Right lobe of liver (tissue), 6 donors: ENCODE measurements at regions of chr9 and their contacts with region 1.

Region 1: DNA sequence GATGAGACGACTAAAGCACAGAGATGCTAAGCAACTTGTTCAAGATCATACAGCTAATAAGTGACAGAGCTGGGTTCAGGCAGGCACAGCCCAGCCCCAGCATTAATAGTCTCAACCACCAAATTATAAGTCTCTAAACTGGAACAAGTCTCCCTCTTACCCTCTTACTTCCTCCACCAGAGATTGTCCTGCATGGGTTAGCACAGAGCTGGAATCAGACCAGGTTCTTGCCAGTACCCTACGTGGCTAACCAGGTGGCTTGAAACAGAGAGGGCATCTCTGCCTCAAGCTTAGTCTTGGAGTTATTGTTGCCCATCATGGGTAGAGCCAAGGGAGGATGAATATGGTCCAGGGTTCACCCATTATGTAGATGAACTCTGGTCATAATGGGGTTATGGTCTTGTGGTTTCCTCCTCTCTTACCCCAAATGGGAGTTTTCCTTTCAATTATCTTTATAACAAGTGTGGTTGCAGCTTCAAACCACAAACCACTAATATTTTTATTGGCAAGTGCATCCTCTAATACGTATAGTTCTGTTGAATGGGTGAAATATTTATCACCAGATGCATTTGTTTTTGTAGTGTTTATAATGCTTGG is 8.3 kb upstream of the XPA start:
- DNase-seq: no peak
- ATAC-seq: no peak
- H3K4me3 ChIP-seq: no peak overlapping the region
- H3K27ac ChIP-seq: no peak overlapping the region
- H3K4me1 ChIP-seq: peaks cover 0 to 13% (median 6%) of the 10 kb centered on the region in 4 donors
- H3K27me3 ChIP-seq: no peaks in the 10 kb centered on the region
- CTCF ChIP-seq: no peak
- POLR2A ChIP-seq: no peak

Region 2: DNA sequence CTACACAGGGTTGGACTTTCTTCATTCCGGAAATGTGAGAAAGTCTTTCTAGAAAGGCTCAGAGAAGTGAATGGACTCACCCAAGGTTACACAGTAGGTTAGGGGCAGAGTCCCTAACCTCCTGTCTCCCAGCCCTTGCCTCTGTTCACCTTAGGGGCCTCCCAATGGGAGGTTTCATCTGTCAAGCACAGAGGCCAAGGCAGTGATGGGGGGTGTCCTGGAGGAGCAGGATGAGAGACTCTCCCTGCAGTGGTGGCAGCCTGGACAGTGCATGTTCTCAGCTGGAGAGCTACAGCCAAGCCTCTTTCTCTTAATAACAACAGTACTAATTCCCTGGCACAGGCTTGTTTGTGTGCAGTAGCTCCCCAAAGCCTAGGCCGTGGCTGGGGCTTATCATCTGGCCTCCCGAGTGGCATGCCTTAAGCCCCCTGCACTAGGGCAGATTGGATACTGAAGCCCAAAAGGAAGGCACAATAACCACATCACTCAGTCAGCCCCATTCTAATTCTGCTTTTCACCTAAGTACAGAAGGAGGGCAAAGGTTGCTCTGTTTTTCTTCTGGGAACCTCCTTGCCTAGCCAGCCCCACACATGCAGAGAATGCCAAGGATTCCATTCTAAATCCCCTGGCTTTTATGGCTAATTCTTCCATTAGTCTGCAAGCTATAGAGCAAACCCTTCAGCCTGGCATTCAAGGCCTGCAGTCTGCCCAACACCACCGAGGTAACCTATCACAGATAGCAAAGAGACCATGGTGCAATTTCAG is 41.9 kb after region 1 on chr9:
- intact Hi-C with region 1: no loop called
- DNase-seq: no peak
- ATAC-seq: no peak
- H3K4me3 ChIP-seq: no peak overlapping the region
- H3K27ac ChIP-seq: no peak overlapping the region
- H3K4me1 ChIP-seq: no peaks in the 10 kb centered on the region
- H3K27me3 ChIP-seq: no peaks in the 10 kb centered on the region
- CTCF ChIP-seq: no peak
- POLR2A ChIP-seq: no peak

Region 3: GRCh38 chr9:97900738-97901565 is 195.5 kb after region 1 on chr9:
- intact Hi-C with region 1: loop called (anchors 5 to 10 kb)
- DNase-seq: peak in 1 of 3 donors; percentile 57
- ATAC-seq: peak; percentile 74 to 88 (median 86)
- H3K4me3 ChIP-seq: no peak overlapping the region
- H3K27ac ChIP-seq: no peak overlapping the region
- H3K4me1 ChIP-seq: peaks cover 0 to 12% (median 0%) of the 10 kb centered on the region in 4 donors
- H3K27me3 ChIP-seq: no peaks in the 10 kb centered on the region
- CTCF ChIP-seq: peak; percentile 65 to 79 (median 71)
- POLR2A ChIP-seq: no peak

Region 4: GRCh38 chr9:97918611-97919010 is 213.2 kb after region 1 on chr9:
- intact Hi-C with region 1: no loop called
- DNase-seq: no peak
- ATAC-seq: no peak
- H3K4me3 ChIP-seq: no peak overlapping the region
- H3K27ac ChIP-seq: no peak overlapping the region
- H3K4me1 ChIP-seq: peaks cover 0 to 28% (median 3%) of the 10 kb centered on the region in 4 donors
- H3K27me3 ChIP-seq: no peaks in the 10 kb centered on the region
- CTCF ChIP-seq: no peak
- POLR2A ChIP-seq: no peak